SK-N-SH (cell line): ENCODE measurements at regions of chr9 and their contacts with region 1.

Region 1: DNA sequence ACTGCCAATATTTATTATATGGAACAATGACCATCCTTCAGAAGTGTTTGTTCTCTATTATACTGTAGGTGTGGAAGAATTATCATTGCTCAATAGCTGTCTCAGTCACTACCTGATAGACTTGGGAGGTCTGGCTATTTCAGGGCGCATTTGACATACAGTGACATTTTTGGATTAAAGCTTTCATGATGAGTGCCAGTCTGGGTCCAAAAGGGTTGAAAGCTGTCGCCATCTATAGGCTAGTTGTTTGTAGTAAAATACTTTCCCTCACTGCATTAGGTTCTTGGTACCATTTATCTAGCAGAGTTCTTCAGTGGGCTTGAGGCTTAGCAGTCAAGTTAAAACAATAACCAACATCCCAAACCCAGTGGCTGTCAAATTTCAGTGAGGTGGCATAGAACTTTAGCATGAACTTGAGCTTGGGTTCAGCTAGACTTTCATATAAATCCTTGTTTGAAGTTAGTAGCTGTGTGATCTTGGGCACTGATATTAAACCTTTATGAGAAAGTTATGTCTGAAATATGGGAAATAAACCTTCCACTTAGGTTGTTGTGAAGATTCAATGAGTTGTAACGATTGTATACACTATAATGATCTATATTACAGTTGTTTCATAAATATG is 110.5 kb upstream of the CDKN2B start:
- DNase-seq: peak; percentile 8
- H3K4me3 ChIP-seq: no peak overlapping the region
- H3K27ac ChIP-seq: no peak overlapping the region
- H3K4me1 ChIP-seq: peaks cover 0 to 10% of the 10 kb centered on the region in 2 experiments; a peak in 2 of 4 replicates
- H3K27me3 ChIP-seq: peaks cover 11% of the 10 kb centered on the region; the same call in 1 of the 2 replicates
- CTCF ChIP-seq: peak; percentile 68
- EP300 ChIP-seq: no peak
- RAD21 ChIP-seq: peak; percentile 68

Region 2: DNA sequence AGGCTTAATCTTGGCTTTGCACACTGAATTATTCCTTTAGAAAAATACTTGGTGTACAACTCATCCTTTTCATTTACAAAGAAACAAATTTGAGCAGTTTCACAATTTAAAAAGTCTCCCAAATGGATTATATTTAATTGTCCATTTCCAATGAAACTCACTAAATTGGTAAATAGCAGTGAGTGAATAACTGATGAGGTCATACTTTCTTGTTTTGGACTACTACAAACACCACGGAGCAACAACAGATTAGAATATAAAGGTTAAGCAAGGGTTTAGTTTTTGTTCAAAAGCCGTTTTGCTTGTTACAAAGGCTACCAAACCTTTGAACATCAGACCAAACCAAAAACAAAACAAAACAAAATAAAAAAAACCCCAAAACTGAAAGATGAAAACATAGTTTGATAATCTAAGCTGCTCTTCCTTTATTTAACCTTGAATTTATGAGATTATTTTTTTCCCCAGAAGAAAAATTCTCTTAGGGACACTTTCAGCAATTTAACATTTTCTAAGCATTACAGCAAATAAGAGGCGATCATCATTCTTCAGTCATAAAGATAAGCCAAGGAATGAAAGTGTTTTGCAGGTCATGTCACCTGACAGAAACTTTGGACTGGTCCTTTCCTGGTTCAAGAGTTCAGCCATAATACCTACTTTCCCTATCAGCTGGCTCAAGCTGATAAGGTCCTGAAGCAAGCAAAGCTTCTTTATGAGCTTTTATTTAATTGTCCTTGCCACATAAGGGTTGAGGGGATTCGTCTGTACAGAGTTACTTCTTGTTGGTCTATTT is 10.9 kb before region 1 on chr9:
- CTCF ChIA-PET with region 1: interaction called, 18 read pairs
- POLR2A ChIA-PET with region 1: no interaction called
- DNase-seq: no peak
- H3K4me3 ChIP-seq: no peak overlapping the region
- H3K27ac ChIP-seq: no peak overlapping the region
- H3K4me1 ChIP-seq: peaks cover 0 to 9% of the 10 kb centered on the region in 2 experiments; a peak in 2 of 4 replicates
- H3K27me3 ChIP-seq: no peaks in the 10 kb centered on the region
- CTCF ChIP-seq: no peak
- EP300 ChIP-seq: no peak
- RAD21 ChIP-seq: no peak

Region 3: DNA sequence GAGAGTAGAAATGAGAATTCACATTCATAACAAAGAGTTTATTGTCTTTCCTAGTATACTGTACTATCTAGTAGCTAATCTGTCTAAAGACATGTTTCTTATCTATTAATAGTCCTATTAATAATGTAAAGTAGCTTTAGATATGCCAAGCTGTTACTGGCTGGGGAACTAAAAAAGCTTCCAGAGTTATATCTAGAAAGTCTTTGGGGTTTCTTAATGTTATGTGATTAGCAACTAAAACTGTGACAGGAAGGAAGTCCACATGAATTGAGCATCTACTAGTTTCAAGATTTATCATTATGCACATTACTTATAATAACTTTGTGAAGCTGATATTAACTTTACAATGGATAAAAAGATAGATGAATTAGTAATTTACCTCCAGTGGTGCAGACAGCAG is 12.2 kb after region 1 on chr9:
- CTCF ChIA-PET with region 1: interaction called, 10 read pairs
- POLR2A ChIA-PET with region 1: no interaction called
- DNase-seq: no peak
- H3K4me3 ChIP-seq: no peak overlapping the region
- H3K27ac ChIP-seq: no peak overlapping the region
- H3K4me1 ChIP-seq: no peaks in the 10 kb centered on the region; a peak in 1 of 4 replicates
- H3K27me3 ChIP-seq: peaks cover 21% of the 10 kb centered on the region; the same call in 1 of the 2 replicates
- CTCF ChIP-seq: no peak
- EP300 ChIP-seq: no peak
- RAD21 ChIP-seq: no peak